ENCODE measurements at regions of chr1 and their contacts with region 1.

Region 1: DNA sequence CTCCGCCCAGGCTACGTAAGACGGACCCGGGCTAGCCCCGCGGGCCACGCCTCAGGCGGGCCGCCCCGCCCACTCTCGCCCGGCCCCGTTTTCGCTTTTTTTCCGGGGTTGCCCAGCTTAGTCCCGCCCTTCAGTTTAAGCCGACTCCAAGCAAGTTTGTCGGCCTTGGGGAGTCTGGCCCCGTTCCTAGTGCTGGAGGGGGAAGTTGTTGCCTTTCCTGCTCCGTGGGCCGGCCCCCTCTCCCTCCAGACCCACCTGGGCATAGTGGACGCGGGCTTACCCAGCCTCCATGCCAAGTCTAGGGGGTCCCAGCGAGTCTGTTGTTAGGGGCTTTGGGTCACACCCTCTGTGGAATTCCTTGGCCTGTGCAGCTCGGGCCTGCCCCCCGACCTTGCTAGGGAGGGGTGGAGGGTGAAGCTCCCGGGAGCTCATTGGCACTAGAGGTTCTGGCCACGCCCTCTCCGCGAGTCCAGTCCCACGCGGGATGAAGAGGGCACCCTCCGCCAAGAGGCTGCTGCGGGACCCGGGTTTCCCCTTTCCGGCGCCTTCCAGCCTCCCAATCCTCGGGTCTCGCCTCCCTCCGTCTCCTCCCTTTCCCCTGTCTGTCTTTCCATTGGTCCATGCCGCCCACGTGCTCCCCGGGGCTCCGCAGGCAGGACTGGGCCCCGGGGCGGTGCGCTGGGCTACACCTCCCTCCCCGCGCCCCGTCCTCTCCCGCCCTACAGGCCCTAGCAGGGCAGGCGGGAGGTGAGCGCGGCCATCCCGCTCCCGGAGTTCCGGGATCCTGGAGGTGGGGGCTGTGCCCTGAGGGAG is 3.3 kb downstream of the RUSC1 start:
- DNase-seq: peak; percentile 88 to 99 (median 94)

Region 2: DNA sequence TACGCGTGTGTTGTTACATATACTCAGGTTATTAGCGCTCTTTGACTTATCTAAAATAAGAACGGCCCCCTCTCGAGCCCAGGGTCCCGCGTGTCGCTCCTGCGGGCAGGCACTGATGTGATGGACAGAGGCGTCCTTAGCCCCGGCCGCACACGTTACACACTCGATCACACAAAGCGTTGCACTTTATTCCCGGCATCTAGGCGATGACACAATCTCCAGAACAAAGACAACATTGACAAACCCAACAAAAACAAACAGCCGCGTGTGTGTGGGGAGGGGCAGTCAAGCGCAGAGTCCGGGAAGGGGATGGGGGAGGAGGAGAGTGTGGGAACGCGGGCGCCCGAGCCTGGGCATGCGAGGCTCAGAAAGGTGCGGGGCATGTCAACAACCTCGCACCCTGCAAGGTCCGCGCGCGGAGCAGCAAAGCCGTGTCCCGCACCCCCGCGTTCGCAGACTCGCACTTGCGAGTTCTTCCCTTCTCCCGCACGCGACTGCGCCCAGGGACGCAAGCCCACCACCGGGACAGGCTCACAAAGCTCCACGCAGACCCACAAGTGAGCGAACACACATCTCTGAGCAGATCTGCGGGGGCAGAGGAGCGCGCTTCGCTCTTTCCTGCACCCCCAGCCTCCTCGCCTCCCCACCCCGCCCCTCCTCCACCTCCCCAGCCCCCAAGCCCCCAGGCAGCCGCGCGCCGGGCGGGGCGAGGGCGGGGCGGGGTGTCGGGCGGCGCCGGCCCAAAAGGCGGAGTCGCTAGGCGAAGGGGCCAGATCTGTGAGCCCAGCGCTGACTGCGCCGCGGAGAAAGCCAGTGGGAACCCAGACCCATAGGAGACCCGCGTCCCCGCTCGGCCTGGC is 196.7 kb before region 1 on chr1 and contains the start of gene EFNA1:
- intact Hi-C with region 1: no loop called
- DNase-seq: peak; percentile 69 to 97 (median 86)

Region 3: DNA sequence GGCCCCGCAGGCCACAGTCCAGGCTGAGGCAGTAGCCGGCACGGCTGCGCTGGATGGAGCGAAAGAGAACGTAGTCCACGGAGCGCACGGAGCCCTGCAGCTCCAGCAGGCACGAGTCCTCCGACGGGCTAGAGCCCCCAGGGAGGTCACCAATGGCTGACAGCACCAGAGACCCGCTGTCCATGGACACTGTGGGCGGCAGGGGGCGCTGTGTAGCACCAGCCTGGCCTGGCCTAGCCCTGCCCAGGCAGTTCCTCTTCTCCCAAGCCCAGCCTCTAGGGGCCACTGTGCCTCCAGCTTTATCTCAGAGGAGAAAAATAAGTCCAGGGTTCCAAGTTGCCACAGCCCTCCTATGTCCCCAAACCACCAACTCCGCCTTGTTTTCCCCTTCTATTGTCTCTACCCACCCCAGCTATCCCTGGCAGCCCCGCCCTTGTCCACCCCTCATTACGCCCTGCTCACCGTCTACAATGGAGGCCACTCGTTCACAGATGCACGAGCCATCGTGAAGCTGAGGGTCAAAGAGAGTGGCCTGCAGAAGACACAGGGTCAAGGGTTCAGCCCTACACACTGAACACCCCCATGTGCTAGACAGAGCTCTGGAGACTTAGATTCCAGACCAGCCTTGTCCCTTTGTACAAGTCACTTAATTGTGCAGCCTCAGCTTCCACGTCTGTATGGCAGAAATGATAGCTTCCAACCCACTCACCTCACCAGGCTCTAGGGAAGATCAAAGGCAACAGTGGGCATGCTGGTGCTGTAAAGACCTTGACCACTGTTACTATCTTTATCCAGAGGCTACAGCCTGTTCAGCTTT is 73.2 kb before region 1 on chr1:
- intact Hi-C with region 1: loop called (anchors 1 kb)
- DNase-seq: peak; percentile 83 to 99 (median 94)

Region 4: DNA sequence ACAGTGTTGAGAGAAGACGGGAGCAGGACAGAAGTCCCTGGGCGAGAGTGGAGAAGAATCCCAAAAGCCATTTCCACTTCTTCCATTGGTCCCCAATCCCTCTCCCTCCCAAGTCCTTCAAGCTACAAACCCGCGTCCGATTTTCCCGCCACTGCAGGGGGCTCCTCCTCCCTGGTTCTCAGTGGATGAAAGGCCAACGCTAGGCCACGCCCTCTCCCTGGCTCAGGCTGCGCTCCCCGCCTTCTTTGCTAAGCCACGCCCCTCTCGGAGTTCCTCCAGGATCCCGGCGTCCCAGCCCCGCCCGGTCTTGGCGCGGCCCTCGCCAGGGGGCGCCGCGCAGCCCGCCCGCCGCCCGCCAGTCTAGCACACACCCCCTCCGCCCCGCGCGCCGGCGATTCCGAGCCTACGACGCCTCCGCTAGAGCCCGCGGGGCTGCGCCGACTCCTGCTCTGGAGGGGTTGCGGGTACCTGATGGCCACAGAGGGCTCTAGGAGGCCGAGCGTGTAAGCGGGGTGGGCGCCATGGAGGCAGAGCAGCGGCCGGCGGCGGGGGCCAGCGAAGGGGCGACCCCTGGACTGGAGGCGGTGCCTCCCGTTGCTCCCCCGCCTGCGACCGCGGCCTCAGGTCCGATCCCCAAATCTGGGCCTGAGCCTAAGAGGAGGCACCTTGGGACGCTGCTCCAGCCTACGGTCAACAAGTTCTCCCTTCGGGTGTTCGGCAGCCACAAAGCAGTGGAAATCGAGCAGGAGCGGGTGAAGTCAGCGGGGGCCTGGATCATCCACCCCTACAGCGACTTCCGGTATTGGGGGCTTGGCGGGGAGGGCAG is 46.7 kb before region 1 on chr1 and contains the start of gene HCN3:
- intact Hi-C with region 1: loop called (anchors 1 kb)
- DNase-seq: peak; percentile 96 to 100 (median 98)

Measured in posterior cingulate gyrus (tissue), 11 donors.